ENCODE measurements at regions of chr10 and their contacts with region 1.

Region 1: GRCh38 chr10:124909563-124909962 is 32.4 kb upstream of the ZRANB1 start:
- DNase-seq: no peak
- H3K4me3 ChIP-seq: no peak overlapping the region
- H3K27ac ChIP-seq: no peak overlapping the region
- H3K4me1 ChIP-seq: peaks cover 0 to 6% of the 10 kb centered on the region in 2 donors
- H3K27me3 ChIP-seq: no peaks in the 10 kb centered on the region
- CTCF ChIP-seq: no peak
- POLR2A ChIP-seq: no peak

Region 2: DNA sequence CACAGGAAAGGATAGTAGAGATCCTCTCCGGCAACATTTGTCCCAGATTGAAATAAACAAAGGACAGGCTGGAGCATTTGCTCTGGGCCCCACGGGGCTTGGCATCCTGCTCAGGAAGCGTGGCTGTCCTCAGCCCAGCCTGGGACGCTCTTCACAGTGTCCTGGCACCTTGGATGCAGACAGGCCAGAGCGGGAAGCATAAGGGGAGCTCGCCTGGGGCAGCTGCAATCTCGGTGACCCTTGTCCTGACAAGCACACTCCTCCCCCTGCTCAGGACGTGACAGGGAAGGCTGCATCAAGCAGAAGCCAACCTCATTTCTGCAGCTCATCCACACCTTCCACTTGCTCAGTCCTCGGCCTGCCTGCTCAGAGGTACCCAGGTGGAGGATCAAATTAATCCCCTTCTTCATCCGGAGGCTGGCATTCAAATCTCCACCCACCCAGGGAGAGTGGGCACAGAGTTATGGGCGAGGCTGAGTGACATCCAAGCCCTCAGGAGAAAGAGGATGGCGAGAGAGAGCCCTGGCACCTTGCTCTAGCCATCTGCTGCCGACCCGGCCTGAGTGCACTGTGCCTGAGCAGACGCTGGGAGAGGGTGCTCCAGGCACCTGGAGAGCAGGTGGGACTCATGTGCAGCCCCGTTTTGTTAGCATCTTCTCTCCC is 60.3 kb before region 1 on chr10:
- intact Hi-C with region 1: no loop called
- DNase-seq: no peak
- H3K4me3 ChIP-seq: no peak overlapping the region
- H3K27ac ChIP-seq: peak overlapping the region in 1 of 2 donors; percentile 25
- H3K4me1 ChIP-seq: no peaks in the 10 kb centered on the region
- H3K27me3 ChIP-seq: no peaks in the 10 kb centered on the region
- CTCF ChIP-seq: no peak
- POLR2A ChIP-seq: no peak

Region 3: GRCh38 chr10:124894569-124895215 is 14.9 kb before region 1 on chr10:
- intact Hi-C with region 1: no loop called
- DNase-seq: peak in 1 of 2 donors; percentile 28
- H3K4me3 ChIP-seq: no peak overlapping the region
- H3K27ac ChIP-seq: no peak overlapping the region
- H3K4me1 ChIP-seq: no peaks in the 10 kb centered on the region
- H3K27me3 ChIP-seq: no peaks in the 10 kb centered on the region
- CTCF ChIP-seq: no peak
- POLR2A ChIP-seq: no peak

Region 4: GRCh38 chr10:124923684-124924083 is 14.1 kb after region 1 on chr10:
- intact Hi-C with region 1: loop called (anchors 2 kb)
- DNase-seq: no peak
- H3K4me3 ChIP-seq: no peak overlapping the region
- H3K27ac ChIP-seq: no peak overlapping the region
- H3K4me1 ChIP-seq: no peaks in the 10 kb centered on the region
- H3K27me3 ChIP-seq: no peaks in the 10 kb centered on the region
- CTCF ChIP-seq: no peak
- POLR2A ChIP-seq: no peak